Aorta (tissue), 5 donors: ENCODE measurements at regions of chr5 and their contacts with region 1.

Region 1: DNA sequence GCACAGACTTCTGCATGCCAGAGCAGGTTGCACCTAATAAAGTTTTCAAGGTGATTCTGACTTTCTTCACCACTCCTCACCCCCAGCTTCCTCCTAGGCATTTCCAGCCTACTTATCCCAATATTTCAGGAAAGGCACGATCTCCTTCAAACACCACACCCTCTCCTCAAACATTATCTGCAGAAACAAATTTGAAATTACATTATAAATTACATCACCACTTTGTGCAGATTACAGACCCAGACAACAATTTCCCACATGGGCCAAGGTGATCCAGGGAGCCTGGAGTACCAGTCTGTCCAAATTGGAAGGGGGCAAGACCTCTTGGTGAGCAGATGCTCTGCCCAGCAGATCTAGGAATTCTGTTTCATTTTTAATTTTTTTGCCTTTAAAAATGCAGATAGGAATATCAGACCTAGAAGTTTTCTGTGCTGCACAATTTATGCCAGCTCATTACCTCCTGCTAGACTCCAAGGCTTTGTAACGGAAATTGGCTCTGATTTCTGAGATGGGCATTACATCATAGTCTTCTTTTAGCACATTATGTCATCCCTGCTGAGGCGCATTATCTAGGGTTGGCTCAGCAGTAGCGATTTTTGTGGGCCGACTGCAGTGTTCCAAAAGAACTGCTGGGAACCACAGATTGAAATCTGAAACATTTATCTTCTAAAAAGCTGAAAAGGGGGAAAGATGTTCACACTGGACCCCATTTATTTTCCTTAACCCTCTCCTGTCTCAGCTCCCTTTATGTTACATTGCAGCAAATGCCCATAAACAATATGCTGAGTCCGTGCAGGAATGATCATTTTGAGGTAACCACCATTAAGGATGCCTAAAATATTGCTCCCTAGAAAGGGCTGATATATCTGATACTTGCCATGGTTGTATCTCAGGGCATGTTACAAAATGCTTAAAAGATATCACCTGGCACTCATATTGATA is 363.2 kb upstream of the SLC30A5 start:
- DNase-seq: peak in 1 of 2 donors; percentile 53
- ATAC-seq: peak; percentile 88
- H3K4me3 ChIP-seq: no peak overlapping the region
- H3K27ac ChIP-seq: no peak overlapping the region
- H3K4me1 ChIP-seq: no peaks in the 10 kb centered on the region
- H3K27me3 ChIP-seq: no peaks in the 10 kb centered on the region

Region 2: GRCh38 chr5:66891183-66891925 is 1839.3 kb before region 1 on chr5:
- intact Hi-C with region 1: loop called in 1 of 2 experiments (anchors 10 kb)
- DNase-seq: no peak
- ATAC-seq: no peak
- H3K4me3 ChIP-seq: no peak overlapping the region
- H3K27ac ChIP-seq: no peak overlapping the region
- H3K4me1 ChIP-seq: no peaks in the 10 kb centered on the region
- H3K27me3 ChIP-seq: no peaks in the 10 kb centered on the region

Region 3: DNA sequence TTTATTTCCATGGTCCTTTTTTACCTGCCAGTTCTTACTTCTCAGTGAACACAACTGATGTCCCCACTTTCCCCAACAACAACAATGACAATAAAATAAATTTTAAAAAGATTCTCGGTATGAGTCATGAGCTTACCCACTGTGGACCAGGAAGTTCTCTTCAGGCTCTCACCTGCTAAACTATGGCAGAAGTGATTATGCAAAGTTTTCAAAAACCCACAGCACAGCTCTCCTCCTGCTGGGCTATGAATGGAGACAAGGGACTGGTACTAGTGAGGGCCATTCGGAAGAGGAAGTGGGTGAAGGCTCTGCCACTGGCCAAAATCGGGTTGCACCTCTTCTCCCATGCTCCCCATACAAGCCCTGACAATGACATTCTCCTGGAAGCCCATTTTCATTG is 85.7 kb before region 1 on chr5:
- intact Hi-C with region 1: no loop called
- DNase-seq: no peak
- ATAC-seq: no peak
- H3K4me3 ChIP-seq: no peak overlapping the region
- H3K27ac ChIP-seq: no peak overlapping the region
- H3K4me1 ChIP-seq: no peaks in the 10 kb centered on the region
- H3K27me3 ChIP-seq: no peaks in the 10 kb centered on the region